CD8-positive, alpha-beta T cell (primary cell): ENCODE measurements at regions of chr11 and their contacts with region 1.

Region 1: DNA sequence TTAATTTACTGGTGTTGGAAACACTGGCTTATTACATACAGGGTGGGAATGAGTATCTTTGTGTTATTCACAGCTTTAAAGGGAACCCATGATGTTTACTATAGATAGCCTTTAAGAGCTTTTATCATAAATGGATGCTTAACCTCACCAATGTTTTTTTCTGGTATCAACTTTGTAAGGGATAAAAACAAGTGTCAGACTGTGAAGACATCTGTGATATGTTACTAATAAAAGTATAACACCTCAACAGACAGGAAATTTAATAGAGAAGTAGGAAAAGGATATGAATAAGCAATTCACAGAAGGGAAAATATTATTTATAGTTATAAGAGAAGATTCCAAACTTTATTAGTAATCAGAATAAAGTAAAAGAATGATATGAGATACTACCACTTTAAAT is 46.3 kb downstream of the ACAT1 start:
- DNase-seq: no peak
- ATAC-seq: no peak
- H3K4me3 ChIP-seq: no peak overlapping the region
- H3K4me3 Mint-ChIP-seq: no peak overlapping the region
- H3K27ac ChIP-seq: no peak overlapping the region
- H3K27ac Mint-ChIP-seq: peak overlapping the region; percentile 56
- H3K4me1 ChIP-seq: peaks cover 6% of the 10 kb centered on the region
- H3K4me1 Mint-ChIP-seq: peaks cover 30% of the 10 kb centered on the region
- H3K27me3 ChIP-seq: no peaks in the 10 kb centered on the region
- H3K27me3 Mint-ChIP-seq: no peaks in the 10 kb centered on the region
- CTCF ChIP-seq: no peak

Region 2: GRCh38 chr11:108154591-108154990 is 13.0 kb before region 1 on chr11:
- CTCF ChIA-PET with region 1: interaction called, 3 read pairs
- POLR2A ChIA-PET with region 1: no interaction called
- intact Hi-C with region 1: loop called in 1 of 2 experiments (anchors 2 kb)
- DNase-seq: no peak
- ATAC-seq: no peak
- H3K4me3 ChIP-seq: no peak overlapping the region
- H3K4me3 Mint-ChIP-seq: no peak overlapping the region
- H3K27ac ChIP-seq: no peak overlapping the region
- H3K27ac Mint-ChIP-seq: no peak overlapping the region
- H3K4me1 ChIP-seq: no peaks in the 10 kb centered on the region
- H3K4me1 Mint-ChIP-seq: peaks cover 5% of the 10 kb centered on the region
- H3K27me3 ChIP-seq: no peaks in the 10 kb centered on the region
- H3K27me3 Mint-ChIP-seq: no peaks in the 10 kb centered on the region
- CTCF ChIP-seq: no peak